ENCODE measurements at regions of chr1 and their contacts with region 1.

Region 1: DNA sequence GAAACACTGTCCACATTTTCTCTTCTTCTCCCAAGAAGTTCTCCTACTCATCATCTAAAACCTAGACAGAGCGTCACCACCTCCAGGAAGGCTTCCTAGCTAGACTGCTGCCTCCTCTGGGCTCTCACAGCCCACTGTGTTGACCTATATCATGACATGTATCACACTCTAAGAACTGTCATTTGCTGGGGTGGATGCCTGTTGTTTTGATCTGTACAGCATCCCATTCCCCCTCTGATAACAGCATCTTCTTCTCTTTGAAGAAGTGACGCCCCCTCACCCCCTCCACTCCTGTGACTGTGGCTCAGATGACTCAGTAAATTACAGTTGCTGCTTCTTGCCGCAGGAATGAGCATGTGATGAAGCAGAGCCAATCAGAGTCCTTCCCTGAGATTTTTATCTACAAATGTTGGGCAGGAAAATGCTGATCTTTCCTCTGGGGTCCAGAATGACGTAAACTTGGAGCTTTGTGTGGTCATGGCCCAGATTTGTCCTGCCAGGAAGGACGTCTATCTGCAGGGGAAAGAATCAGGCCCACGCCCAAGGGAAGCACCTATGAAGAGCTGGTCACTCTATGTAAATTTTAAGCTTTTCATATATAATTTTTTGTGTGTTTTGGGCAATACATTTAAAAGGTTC is 28.0 kb upstream of the FOXO6 start:
- DNase-seq: no peak
- ATAC-seq: no peak
- H3K4me3 Mint-ChIP-seq: no peak overlapping the region
- H3K27ac Mint-ChIP-seq: no peak overlapping the region
- H3K4me1 Mint-ChIP-seq: peaks cover 11% of the 10 kb centered on the region
- H3K27me3 Mint-ChIP-seq: peaks cover under 1% of the 10 kb centered on the region
- CTCF ChIP-seq: no peak

Region 2: GRCh38 chr1:41175546-41175945 is 157.7 kb before region 1 on chr1:
- CTCF ChIA-PET with region 1: no interaction called
- POLR2A ChIA-PET with region 1: no interaction called
- DNase-seq: no peak
- ATAC-seq: no peak
- H3K4me3 Mint-ChIP-seq: no peak overlapping the region
- H3K27ac Mint-ChIP-seq: no peak overlapping the region
- H3K4me1 Mint-ChIP-seq: no peaks in the 10 kb centered on the region
- H3K27me3 Mint-ChIP-seq: peaks cover 4% of the 10 kb centered on the region; the same call in 1 of the 2 replicates
- CTCF ChIP-seq: no peak

Region 3: GRCh38 chr1:41313661-41314131 is 19.6 kb before region 1 on chr1:
- CTCF ChIA-PET with region 1: interaction called, 87 read pairs
- POLR2A ChIA-PET with region 1: no interaction called
- DNase-seq: peak; percentile 59
- ATAC-seq: peak; percentile 79
- H3K4me3 Mint-ChIP-seq: no peak overlapping the region
- H3K27ac Mint-ChIP-seq: no peak overlapping the region
- H3K4me1 Mint-ChIP-seq: peaks cover 22% of the 10 kb centered on the region
- H3K27me3 Mint-ChIP-seq: peaks cover 10% of the 10 kb centered on the region
- CTCF ChIP-seq: peak; percentile 70

Region 4: GRCh38 chr1:41371630-41372599 is 38.6 kb after region 1 on chr1:
- CTCF ChIA-PET with region 1: interaction called, 15 read pairs
- POLR2A ChIA-PET with region 1: interaction called, 4 read pairs
- DNase-seq: peak; percentile 87
- ATAC-seq: peak; percentile 91
- H3K4me3 Mint-ChIP-seq: peak overlapping the region; percentile 62
- H3K27ac Mint-ChIP-seq: peak overlapping the region; percentile 85; the same call in 1 of the 2 replicates
- H3K4me1 Mint-ChIP-seq: peaks cover 68% of the 10 kb centered on the region
- H3K27me3 Mint-ChIP-seq: peaks cover 31% of the 10 kb centered on the region
- CTCF ChIP-seq: no peak

Region 5: DNA sequence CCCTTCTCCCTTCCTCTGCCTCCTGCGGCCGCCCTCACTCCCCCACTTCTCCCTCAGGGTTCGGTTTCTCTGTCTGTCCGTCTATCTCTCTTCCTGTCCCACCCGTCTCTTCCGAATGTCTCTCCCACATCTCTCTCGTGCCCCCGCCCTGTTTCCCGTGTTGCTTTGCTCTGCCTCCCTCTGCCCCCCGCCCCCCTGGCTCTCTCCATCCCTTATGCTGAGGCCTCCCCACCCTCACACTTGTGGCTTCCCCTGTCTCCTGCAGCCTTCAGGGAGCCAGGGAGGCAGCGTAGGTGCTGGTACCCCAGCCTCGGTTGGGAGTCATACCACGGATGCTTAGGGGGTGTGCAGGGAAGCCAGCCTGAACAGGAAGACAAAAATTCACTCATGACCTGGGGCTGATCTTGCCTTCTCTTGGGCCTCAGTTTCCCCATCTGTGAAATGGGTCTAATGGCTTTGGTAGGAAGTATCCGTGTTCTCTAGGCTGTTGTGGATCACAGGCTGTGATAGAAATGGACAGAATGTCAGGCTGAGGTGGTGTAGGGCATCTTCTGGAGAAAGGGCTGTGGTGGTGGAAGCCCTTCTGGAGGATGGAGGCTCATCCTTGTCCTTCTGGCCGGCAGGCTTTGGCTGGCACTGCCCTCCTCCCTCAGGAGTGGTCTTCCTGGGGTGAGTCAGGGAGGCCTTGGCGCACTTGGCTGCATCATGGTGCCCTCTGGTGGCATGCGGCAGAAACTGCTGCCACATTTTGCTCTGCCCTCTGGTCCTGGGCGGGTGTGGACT is 83.5 kb after region 1 on chr1:
- CTCF ChIA-PET with region 1: interaction called, 39 read pairs
- POLR2A ChIA-PET with region 1: no interaction called
- DNase-seq: peak; percentile 82
- ATAC-seq: peak; percentile 86
- H3K4me3 Mint-ChIP-seq: no peak overlapping the region
- H3K27ac Mint-ChIP-seq: no peak overlapping the region
- H3K4me1 Mint-ChIP-seq: peaks cover 15% of the 10 kb centered on the region
- H3K27me3 Mint-ChIP-seq: peaks cover 3% of the 10 kb centered on the region; the same call in 1 of the 2 replicates
- CTCF ChIP-seq: peak; percentile 76

Region 6: DNA sequence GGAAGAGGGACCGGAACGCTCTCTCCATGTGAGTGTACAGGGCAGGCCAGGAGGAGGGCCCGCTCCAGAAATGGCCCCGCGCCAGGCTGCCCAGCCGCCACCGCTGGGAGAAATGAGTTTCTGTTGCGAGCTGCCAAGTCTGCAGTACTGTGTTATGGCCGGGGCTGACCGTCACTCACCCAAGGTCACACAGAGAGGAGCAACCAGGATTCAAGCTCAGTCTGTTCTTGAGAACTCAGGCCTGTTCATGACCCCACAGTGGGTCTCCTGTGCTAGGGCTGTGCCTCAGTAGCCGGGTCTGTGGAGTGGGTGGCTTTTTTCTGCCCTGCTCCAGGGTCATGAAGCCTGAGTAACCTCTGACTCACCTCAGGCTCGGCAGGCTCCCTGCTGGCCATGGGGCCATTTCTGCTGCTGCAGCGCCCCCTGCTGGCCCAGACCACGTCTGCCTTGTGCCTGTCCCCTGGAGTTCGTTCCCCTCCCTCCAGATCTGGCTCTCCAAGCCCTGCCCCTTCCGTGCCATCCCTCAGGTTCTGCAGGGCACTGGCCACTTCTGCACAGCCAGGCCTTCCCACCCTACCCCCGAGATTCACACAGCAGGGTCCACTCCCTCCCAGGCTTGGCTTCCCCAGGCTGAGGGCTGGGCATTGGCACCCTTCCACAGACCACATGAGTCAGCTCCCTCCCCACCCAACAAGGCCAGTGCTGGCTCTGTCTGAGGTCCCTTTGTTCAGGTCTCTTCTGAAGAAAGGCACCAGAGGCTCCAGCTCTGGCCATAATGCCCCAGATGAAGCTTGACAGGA is 99.4 kb after region 1 on chr1:
- CTCF ChIA-PET with region 1: interaction called, 14 read pairs
- POLR2A ChIA-PET with region 1: no interaction called
- DNase-seq: peak; percentile 94
- ATAC-seq: peak; percentile 85
- H3K4me3 Mint-ChIP-seq: no peak overlapping the region
- H3K27ac Mint-ChIP-seq: no peak overlapping the region
- H3K4me1 Mint-ChIP-seq: peaks cover 33% of the 10 kb centered on the region
- H3K27me3 Mint-ChIP-seq: peaks cover 3% of the 10 kb centered on the region; the same call in 1 of the 2 replicates
- CTCF ChIP-seq: peak; percentile 98

Region 7: DNA sequence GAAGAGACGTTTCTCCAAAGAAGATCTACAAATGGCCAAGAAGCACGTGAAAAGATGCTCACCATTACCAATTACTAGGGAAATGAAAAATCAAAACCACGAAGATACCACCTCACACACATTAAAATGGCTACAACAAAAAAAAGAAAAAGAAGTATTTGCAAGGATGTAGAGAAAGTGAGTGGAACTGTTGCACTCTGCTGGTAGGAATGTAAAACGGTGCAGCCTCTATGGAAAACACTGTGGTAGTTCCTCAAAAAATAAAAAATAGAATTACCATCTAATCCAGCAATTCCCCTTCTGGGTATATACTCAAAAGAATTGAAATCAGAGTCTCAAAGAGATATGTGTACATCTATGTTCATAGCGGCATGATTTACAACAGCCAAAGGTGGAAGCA is 266.6 kb after region 1 on chr1:
- CTCF ChIA-PET with region 1: no interaction called
- POLR2A ChIA-PET with region 1: no interaction called
- DNase-seq: no peak
- ATAC-seq: peak; percentile 70
- H3K4me3 Mint-ChIP-seq: no peak overlapping the region
- H3K27ac Mint-ChIP-seq: no peak overlapping the region
- H3K4me1 Mint-ChIP-seq: no peaks in the 10 kb centered on the region; the same call in 1 of the 2 replicates
- H3K27me3 Mint-ChIP-seq: no peaks in the 10 kb centered on the region
- CTCF ChIP-seq: no peak

Region 8: DNA sequence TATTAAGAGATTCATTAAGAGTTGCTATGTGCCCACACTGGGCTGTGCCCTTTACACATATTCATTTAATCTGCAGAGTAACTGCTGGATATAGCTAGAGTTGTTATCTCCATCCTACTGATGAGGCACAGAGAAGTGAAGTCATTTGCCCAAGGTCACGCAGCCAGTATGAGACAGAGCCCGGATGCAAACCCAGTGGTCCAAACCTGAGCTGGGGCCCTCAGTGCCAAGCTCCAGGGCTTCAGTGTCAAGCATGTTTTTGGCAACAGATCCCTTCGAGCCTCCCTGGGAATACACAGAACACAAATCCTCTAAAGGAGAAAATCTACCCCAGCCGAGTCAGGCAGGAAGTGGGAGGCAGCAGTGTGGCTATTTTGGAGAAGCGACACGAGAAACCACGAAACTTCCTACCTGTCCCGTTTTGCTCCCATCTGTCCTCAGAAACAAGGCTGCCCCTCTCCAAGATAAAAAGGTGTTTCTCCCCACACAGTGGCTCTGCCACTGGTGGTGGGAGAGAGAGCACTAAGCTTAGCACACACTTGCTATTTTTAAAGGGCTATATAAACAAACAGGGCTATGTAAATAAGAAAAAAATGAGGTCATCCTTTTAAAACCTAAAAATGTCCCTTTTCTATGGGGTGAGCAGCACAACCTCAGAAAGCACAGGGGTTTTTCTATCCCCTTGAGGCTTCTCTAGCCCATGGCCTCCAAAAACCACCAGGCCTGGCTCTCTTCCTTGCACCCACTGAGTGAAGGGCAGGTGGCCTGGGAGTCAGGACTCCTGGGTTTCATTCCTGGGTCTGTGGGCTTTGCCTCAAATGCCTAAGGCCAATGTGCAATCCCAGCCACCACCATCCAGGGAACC is 289.8 kb after region 1 on chr1:
- CTCF ChIA-PET with region 1: no interaction called
- POLR2A ChIA-PET with region 1: no interaction called
- DNase-seq: no peak
- ATAC-seq: no peak
- H3K4me3 Mint-ChIP-seq: no peak overlapping the region
- H3K27ac Mint-ChIP-seq: no peak overlapping the region
- H3K4me1 Mint-ChIP-seq: peaks cover 19% of the 10 kb centered on the region
- H3K27me3 Mint-ChIP-seq: no peaks in the 10 kb centered on the region
- CTCF ChIP-seq: no peak